Activated CD8-positive, alpha-beta T cell treated with anti-CD3 and anti-CD28 coated beads for 36 hours (primary cell): ENCODE measurements at regions of chrX and their contacts with region 1.

Region 1: DNA sequence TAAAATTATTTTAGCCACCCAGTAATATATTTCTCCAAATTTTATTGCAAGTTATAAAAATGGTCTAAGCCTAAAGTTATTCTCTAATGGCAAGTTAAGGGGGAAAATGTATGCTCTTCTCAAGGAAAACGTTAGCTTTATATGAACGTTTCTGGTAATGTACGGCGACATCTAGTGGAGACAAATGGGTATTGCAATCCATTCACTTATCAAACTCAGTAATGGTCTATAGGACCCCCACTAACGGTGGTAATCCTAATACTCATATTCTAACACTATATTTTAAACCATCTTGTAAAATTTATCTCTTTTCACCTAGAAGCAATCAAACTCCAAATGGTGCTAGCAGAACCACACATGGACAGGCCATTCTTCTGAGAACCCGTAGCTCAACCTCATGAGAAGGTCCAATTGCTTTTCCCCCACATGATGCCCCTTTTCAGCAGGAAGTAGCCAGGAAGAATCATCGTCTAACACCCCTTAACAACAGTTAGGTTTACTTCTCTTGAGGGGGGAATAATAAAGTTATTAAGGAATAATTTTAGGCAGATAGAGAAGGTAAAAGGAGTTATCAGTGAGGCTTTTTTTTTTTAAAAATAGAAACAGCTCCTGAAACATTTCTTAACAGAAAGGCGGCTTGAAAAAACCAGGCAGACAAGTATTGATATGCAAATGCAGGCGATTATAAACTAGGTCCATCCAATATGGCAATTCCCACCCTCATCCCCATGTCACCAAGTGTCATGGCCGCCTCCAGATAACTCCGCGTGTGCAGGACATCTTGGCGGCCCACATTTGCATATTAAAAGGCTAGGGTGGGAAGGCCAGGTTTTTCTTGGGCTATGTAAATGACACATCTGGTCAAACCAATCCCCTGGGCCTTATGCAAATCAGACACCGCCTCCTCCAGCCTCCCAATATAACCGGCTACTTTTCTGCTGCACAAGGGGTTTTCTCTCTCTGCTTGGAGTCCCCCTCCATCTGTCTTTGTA is 35.0 kb downstream of the NUDT11 start:
- DNase-seq: peak; percentile 7
- ATAC-seq: no peak
- H3K4me3 Mint-ChIP-seq: no peak overlapping the region
- H3K27ac Mint-ChIP-seq: no peak overlapping the region
- H3K4me1 Mint-ChIP-seq: no peaks in the 10 kb centered on the region
- H3K27me3 Mint-ChIP-seq: no peaks in the 10 kb centered on the region
- CTCF ChIP-seq: peak; percentile 74

Region 2: GRCh38 chrX:51144852-51145442 is 316.4 kb before region 1 on chrX:
- CTCF ChIA-PET with region 1: interaction called, 6 read pairs
- POLR2A ChIA-PET with region 1: no interaction called
- intact Hi-C with region 1: loop called (anchors 10 kb)
- DNase-seq: peak; percentile 51
- ATAC-seq: peak; percentile 49
- H3K4me3 Mint-ChIP-seq: no peak overlapping the region
- H3K27ac Mint-ChIP-seq: no peak overlapping the region
- H3K4me1 Mint-ChIP-seq: no peaks in the 10 kb centered on the region
- H3K27me3 Mint-ChIP-seq: peaks cover 8% of the 10 kb centered on the region
- CTCF ChIP-seq: peak; percentile 54

Region 3: GRCh38 chrX:51336584-51336983 is 124.8 kb before region 1 on chrX:
- CTCF ChIA-PET with region 1: interaction called, 69 read pairs
- POLR2A ChIA-PET with region 1: interaction called, 3 read pairs
- intact Hi-C with region 1: no loop called
- DNase-seq: peak; percentile 29
- ATAC-seq: peak; percentile 69
- H3K4me3 Mint-ChIP-seq: no peak overlapping the region
- H3K27ac Mint-ChIP-seq: no peak overlapping the region
- H3K4me1 Mint-ChIP-seq: peaks cover 3% of the 10 kb centered on the region
- H3K27me3 Mint-ChIP-seq: no peaks in the 10 kb centered on the region
- CTCF ChIP-seq: peak; percentile 40

Region 4: GRCh38 chrX:51420610-51421009 is 40.7 kb before region 1 on chrX:
- CTCF ChIA-PET with region 1: interaction called, 17 read pairs
- POLR2A ChIA-PET with region 1: no interaction called
- intact Hi-C with region 1: no loop called
- DNase-seq: peak; percentile 13
- ATAC-seq: peak; percentile 58
- H3K4me3 Mint-ChIP-seq: no peak overlapping the region
- H3K27ac Mint-ChIP-seq: no peak overlapping the region
- H3K4me1 Mint-ChIP-seq: peaks cover 8% of the 10 kb centered on the region
- H3K27me3 Mint-ChIP-seq: no peaks in the 10 kb centered on the region
- CTCF ChIP-seq: peak; percentile 62

Region 5: DNA sequence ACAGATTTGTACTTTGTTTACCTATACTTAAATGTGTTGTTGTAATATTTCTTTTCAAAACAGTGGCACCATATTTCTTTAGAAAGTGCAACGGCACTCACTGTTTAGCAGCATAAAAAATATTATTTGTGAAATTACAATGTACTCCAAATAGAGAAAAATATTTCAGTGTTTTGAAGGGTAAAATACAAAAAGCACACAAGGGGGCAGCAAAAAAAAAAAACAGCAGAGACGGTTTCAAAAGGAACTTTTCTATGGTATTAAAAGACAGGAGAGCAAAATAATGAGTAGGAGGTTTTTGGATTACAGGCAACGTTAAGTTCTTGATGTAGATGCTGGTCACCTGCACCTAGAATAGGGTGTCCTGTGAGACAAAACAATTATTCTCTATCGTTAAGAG is 33.1 kb after region 1 on chrX:
- CTCF ChIA-PET with region 1: no interaction called
- POLR2A ChIA-PET with region 1: no interaction called
- intact Hi-C with region 1: no loop called
- DNase-seq: no peak
- ATAC-seq: no peak
- H3K4me3 Mint-ChIP-seq: peak overlapping the region; percentile 74
- H3K27ac Mint-ChIP-seq: no peak overlapping the region
- H3K4me1 Mint-ChIP-seq: peaks cover 15% of the 10 kb centered on the region
- H3K27me3 Mint-ChIP-seq: peaks cover 20% of the 10 kb centered on the region
- CTCF ChIP-seq: peak; percentile 21

Region 6: GRCh38 chrX:51507551-51507950 is 46.2 kb after region 1 on chrX:
- CTCF ChIA-PET with region 1: no interaction called
- POLR2A ChIA-PET with region 1: no interaction called
- intact Hi-C with region 1: no loop called
- DNase-seq: no peak
- ATAC-seq: no peak
- H3K4me3 Mint-ChIP-seq: no peak overlapping the region
- H3K27ac Mint-ChIP-seq: no peak overlapping the region
- H3K4me1 Mint-ChIP-seq: no peaks in the 10 kb centered on the region
- H3K27me3 Mint-ChIP-seq: no peaks in the 10 kb centered on the region
- CTCF ChIP-seq: no peak